ENCODE measurements at regions of chr1 and their contacts with region 1.

Region 1: GRCh38 chr1:116737020-116737854 is 17.0 kb upstream of the CD2 start:
- DNase-seq: peak; percentile 89
- ATAC-seq: peak; percentile 59
- H3K4me3 Mint-ChIP-seq: peak overlapping the region; percentile 69
- H3K27ac Mint-ChIP-seq: peak overlapping the region; percentile 99
- H3K4me1 Mint-ChIP-seq: peaks cover 59% of the 10 kb centered on the region
- H3K27me3 Mint-ChIP-seq: no peaks in the 10 kb centered on the region

Region 2: GRCh38 chr1:116724765-116725375 is 12.4 kb before region 1 on chr1:
- CTCF ChIA-PET with region 1: interaction called, 24 read pairs
- DNase-seq: peak; percentile 86
- ATAC-seq: peak; percentile 83
- H3K4me3 Mint-ChIP-seq: no peak overlapping the region
- H3K27ac Mint-ChIP-seq: no peak overlapping the region
- H3K4me1 Mint-ChIP-seq: peaks cover 25% of the 10 kb centered on the region
- H3K27me3 Mint-ChIP-seq: no peaks in the 10 kb centered on the region

Region 3: GRCh38 chr1:116769561-116769977 is 32.3 kb after region 1 on chr1:
- CTCF ChIA-PET with region 1: interaction called, 317 read pairs
- DNase-seq: peak; percentile 91
- ATAC-seq: peak; percentile 55
- H3K4me3 Mint-ChIP-seq: peak overlapping the region; percentile 58
- H3K27ac Mint-ChIP-seq: peak overlapping the region; percentile 97
- H3K4me1 Mint-ChIP-seq: peaks cover 85% of the 10 kb centered on the region
- H3K27me3 Mint-ChIP-seq: no peaks in the 10 kb centered on the region

Region 4: DNA sequence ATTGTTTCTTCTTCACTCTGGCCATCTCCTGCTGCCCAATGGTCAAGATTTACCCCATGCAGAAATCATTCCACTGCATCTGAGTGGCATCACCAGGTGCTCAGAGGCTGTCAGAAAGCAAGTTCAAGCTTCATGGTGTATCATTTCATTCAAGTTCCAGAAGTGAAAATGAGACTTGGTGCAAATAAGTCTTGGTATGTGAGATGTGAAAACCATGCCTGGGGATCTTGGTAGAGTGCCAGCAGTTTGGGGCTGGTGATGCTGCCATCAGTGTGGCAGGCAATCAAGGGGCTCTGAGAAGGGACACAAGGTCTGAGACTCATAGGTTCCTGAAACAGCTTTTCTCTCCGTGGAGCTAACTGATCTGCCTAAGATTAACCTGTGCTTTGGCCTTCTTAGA is 69.0 kb after region 1 on chr1:
- CTCF ChIA-PET with region 1: interaction called, 20 read pairs
- DNase-seq: peak; percentile 81
- ATAC-seq: peak; percentile 34
- H3K4me3 Mint-ChIP-seq: peak overlapping the region; percentile 80
- H3K27ac Mint-ChIP-seq: peak overlapping the region; percentile 97
- H3K4me1 Mint-ChIP-seq: peaks cover 85% of the 10 kb centered on the region
- H3K27me3 Mint-ChIP-seq: no peaks in the 10 kb centered on the region

Region 5: DNA sequence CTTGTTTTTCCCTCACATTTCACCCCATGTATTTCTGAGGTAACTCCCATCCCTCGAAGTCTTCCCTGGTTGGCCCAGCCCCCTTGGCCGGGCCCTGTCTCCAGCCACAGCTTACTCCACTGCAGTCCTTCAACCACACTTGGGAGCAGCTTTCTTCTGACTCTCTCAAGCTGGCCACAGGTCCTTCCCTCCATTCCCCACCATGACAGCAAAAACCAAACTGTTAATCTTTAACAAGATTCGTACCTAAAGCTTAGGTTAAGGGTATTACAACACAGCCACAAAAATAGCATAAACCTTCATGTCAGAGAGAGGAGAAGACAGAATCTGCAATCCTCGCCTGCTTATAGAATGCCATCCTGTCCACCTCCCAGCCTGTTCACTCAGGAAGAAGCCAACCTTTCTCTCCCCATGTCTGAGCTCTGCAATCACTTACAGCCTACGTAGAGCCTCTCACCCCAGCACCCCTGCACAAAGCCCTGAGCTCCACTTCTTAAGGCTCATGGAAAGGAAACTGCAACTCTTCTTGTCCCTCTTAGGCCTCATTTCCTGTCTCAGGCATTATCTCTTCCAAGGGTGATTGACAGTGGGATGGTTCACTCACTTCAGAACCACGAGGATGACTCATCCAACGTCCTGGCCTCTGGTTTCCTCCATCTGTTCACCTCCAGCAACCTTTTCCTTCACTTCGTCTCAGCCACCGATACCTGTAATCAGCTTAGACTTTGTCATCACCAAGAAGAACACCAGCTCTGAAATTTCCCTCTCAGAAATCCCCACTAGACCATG is 89.8 kb after region 1 on chr1:
- CTCF ChIA-PET with region 1: interaction called, 26 read pairs
- DNase-seq: peak; percentile 87
- ATAC-seq: peak; percentile 90
- H3K4me3 Mint-ChIP-seq: peak overlapping the region; percentile 66
- H3K27ac Mint-ChIP-seq: peak overlapping the region; percentile 96
- H3K4me1 Mint-ChIP-seq: peaks cover 54% of the 10 kb centered on the region
- H3K27me3 Mint-ChIP-seq: no peaks in the 10 kb centered on the region

Region 6: DNA sequence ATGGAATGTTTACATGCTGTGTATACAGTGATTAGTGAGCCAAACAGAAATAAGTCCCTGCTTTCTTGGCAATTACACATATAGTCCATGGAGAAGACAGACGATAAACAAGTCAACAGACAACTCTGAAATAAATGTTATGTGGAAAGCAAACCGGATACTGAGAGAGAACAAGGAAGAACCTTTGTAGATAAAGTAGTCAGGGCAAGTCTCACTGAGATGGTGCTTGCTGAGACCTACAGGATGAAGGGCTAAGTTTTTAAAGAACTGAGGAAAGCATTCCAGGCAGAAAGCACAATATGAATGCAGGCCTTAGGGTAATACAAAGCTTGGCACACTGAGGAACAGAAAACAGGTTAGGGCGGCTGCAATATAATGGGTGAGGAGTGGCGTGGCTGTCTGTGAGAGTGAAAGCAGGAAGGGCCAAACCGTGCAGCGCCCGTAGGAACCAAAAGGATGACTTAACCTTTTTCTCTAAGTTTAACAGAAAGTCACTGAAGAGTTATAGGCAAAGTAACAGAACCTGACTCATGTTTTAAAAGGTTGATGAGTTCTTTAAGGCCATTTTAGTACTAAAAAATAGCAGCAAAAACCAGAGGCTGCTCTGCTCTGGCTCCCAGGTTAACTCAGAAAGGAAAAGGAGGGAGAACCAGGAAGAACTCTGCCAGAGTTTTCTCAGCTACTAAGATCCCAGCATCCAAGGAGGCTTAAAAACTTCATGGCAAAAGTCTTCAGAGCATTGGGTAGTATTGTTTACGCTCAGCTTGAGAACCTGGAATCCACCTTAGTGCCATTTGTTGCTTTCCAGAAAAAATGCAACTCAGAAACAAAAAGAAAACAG is 314.2 kb after region 1 on chr1:
- CTCF ChIA-PET with region 1: interaction called, 55 read pairs
- DNase-seq: peak; percentile 75
- ATAC-seq: peak; percentile 80
- H3K4me3 Mint-ChIP-seq: peak overlapping the region; percentile 68
- H3K27ac Mint-ChIP-seq: peak overlapping the region; percentile 88
- H3K4me1 Mint-ChIP-seq: peaks cover 40% of the 10 kb centered on the region
- H3K27me3 Mint-ChIP-seq: no peaks in the 10 kb centered on the region